Left ventricle myocardium superior (tissue), 1 donor: ENCODE measurements at regions of chr2 and their contacts with region 1.

Region 1: GRCh38 chr2:219041252-219041651 is at the start of gene CFAP65:
- DNase-seq: no peak
- ATAC-seq: no peak
- total RNA-seq, gene CFAP65: not detected

Region 2: GRCh38 chr2:219142329-219142728 is 101.1 kb after region 1 on chr2:
- intact Hi-C with region 1: loop called (anchors 10 kb)
- DNase-seq: no peak
- ATAC-seq: no peak

Region 3: DNA sequence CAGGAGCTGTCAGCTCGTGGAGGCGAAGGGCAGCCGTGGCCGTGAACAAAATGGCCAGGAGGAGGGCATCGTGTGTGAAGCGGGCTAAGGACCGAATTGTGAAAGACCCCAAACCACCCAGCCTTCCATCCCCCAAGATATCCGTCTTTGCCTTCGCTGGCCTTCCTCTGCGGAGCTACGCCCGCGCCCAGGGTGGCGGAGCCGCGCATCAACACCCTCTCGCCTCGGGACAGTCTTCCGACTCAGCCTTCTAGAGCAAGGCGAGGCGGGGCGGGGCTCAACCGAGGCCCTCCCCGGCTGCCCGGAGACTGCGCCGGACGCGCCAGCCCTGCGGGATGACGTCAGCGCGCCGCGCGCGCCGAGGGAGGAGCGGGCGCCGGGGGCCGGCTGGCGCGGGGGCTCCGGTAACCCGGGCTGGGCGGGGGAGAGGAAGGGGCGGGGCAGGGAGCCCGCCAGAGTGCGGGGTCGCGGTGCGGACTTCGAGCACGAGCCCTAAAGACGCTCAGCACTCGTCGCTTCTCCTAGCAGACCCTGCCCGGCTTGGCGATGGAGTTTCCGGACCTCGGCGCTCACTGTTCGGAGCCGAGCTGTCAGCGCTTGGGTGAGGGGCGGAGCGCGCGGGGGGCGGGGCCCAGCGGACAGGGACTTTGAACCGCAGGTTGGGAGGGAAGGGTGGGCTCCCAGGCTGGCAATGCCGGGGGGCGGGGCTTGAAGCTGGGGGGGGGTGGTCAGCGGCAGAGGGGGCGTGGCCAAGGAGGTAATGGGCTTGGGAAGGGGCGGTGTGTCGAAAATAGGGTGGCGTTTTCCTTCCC is 165.4 kb after region 1 on chr2 and contains the start of gene ZFAND2B:
- intact Hi-C with region 1: no loop called
- DNase-seq: peak; percentile 98
- ATAC-seq: peak; percentile 97
- total RNA-seq, gene ZFAND2B: 20.3 TPM